Activated CD4-positive, alpha-beta memory T cell treated with anti-CD3 and anti-CD28 coated beads for 36 hours (primary cell): ENCODE measurements at regions of chr6 and their contacts with region 1.

Region 1: DNA sequence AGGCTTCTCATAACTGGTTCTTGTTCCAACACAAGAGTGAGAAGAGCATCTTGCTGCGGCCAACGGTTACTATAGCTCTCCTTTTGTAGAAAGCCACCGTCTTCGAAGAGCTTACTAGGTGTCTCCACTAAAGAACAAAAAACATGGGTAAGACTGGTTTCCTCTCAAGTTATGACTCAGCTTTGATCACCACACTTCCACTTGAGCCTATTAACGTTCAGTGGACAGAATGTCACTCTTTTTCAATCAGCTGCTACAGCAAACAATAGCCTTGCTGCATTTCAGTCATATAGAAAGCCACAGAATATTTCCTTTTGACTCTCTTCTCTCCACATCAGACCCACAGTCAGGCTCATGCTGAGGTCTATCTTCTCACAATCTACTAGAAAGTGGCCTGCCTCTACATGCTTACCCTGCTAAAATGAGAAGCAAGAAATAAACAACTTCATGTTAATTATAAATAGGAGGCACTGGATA is 243.5 kb upstream of the PREP start:
- DNase-seq: peak; percentile 68
- H3K4me3 Mint-ChIP-seq: no peak overlapping the region
- H3K27ac Mint-ChIP-seq: peak overlapping the region; percentile 70
- H3K4me1 Mint-ChIP-seq: peaks cover 65% of the 10 kb centered on the region
- H3K27me3 Mint-ChIP-seq: peaks cover 48% of the 10 kb centered on the region

Region 2: DNA sequence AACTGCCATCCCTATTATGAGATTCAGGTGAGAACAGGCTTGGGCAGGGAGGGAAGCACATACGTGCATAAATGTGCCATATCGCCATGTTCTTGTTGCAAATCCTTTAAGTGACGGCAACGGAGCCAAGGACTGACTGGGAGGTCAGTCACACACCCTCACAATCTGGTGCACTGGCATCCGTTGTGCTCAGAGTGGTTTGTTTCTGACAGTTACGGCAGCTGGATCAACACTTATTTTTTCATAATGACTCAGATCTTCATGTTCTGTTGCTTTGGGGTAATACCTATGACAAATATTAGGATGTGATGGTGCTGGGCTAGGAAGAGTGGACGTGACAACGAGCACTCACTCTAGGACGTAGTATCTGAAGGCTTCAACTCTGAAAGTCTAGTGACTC is 187.4 kb before region 1 on chr6:
- CTCF ChIA-PET with region 1: interaction called, 5 read pairs
- POLR2A ChIA-PET with region 1: interaction called, 3 read pairs
- intact Hi-C with region 1: loop called (anchors 2 kb)
- DNase-seq: peak; percentile 71
- H3K4me3 Mint-ChIP-seq: peak overlapping the region; percentile 36
- H3K27ac Mint-ChIP-seq: peak overlapping the region; percentile 80
- H3K4me1 Mint-ChIP-seq: peaks cover 30% of the 10 kb centered on the region
- H3K27me3 Mint-ChIP-seq: peaks cover 20% of the 10 kb centered on the region

Region 3: DNA sequence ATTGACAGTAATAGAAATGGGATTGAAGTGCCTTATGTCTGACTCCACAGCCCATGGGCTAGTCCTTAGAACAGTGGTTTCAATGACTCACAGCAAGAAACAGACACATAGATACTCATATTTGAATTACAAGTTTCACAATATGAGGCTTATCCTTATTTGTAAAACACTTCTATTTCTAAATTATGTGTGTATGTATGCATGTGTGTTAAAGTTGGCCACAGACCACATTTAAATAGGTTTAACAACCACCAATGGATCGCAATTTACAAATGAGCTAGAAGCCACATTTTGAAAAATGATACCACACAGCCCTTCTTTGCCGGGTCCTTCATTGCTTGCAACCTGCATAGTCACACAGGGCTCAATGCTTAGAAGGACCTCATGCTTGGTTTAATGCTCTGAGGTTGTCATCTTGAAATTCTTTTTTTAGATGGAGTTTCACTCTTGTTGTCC is 85.8 kb before region 1 on chr6:
- CTCF ChIA-PET with region 1: no interaction called
- POLR2A ChIA-PET with region 1: no interaction called
- intact Hi-C with region 1: loop called (anchors 1 kb)
- DNase-seq: peak; percentile 22
- H3K4me3 Mint-ChIP-seq: no peak overlapping the region
- H3K27ac Mint-ChIP-seq: peak overlapping the region; percentile 26
- H3K4me1 Mint-ChIP-seq: peaks cover 9% of the 10 kb centered on the region
- H3K27me3 Mint-ChIP-seq: peaks cover 10% of the 10 kb centered on the region

Region 4: DNA sequence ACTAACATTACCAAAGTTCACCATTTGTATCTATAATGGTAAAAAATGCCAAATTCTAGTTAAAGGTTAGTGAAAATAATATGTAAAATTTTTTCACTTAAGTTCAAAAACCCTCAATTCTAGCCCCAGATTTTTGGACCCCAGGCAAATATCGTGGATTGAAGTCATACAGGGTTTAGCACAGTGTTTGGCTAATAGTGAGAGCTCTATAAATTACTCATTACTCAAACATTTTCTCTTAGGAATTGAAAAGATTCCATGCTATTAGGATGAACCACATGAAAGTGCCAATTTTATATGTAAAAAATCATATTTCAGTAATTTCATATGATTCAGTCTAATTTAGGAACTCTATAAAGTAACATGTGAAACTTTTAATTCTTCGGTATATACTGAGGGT is 73.3 kb before region 1 on chr6:
- CTCF ChIA-PET with region 1: no interaction called
- POLR2A ChIA-PET with region 1: no interaction called
- intact Hi-C with region 1: no loop called
- DNase-seq: no peak
- H3K4me3 Mint-ChIP-seq: no peak overlapping the region
- H3K27ac Mint-ChIP-seq: no peak overlapping the region
- H3K4me1 Mint-ChIP-seq: peaks cover under 1% of the 10 kb centered on the region
- H3K27me3 Mint-ChIP-seq: peaks cover 18% of the 10 kb centered on the region

Region 5: DNA sequence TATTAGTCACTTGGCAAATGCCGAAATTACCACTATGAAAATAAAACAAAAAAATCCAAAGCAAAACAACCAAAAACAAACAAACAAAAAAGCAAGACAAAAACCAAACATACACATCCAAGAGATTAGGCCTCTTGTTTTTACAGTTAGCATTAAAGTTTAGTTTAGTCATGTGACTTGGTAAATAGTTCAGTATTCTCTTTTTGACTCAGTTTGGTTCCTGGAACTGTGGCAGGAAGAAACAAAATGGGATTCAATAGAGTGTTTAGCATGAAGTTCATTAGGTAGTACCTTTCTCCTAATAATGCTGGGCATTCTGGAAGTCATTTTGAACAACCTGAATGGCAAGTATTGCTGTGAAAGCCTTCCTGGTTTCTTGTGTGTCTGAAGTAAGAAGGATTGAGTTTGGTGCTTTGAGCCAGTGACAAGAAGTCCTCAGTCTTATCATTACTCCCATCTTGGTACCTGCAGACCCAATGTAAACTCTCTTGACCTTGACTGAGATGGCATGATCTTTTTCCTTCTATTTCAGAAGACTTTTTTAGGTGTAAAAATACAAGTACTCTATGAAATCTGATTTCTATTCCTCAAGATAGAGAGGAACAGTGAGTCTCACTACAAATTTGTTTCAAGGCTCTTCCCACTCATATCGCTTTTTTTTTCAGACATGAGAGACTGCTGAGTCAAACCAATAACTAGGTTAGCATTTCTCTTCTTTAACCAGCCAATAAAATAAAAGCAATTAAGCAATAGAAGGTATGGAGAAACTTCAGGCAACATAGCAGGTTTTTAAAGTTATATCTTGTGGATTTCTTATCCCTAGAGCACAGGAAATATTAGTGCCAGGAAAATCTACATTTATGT is 19.9 kb before region 1 on chr6:
- CTCF ChIA-PET with region 1: no interaction called
- POLR2A ChIA-PET with region 1: interaction called, 5 read pairs
- intact Hi-C with region 1: loop called (anchors 1 kb)
- DNase-seq: no peak
- H3K4me3 Mint-ChIP-seq: peak overlapping the region; percentile 27
- H3K27ac Mint-ChIP-seq: peak overlapping the region; percentile 81
- H3K4me1 Mint-ChIP-seq: peaks cover 29% of the 10 kb centered on the region
- H3K27me3 Mint-ChIP-seq: peaks cover 13% of the 10 kb centered on the region

Region 6: GRCh38 chr6:105898286-105898685 is 251.9 kb after region 1 on chr6:
- CTCF ChIA-PET with region 1: no interaction called
- POLR2A ChIA-PET with region 1: no interaction called
- intact Hi-C with region 1: loop called (anchors 1 kb)
- DNase-seq: peak; percentile 67
- H3K4me3 Mint-ChIP-seq: no peak overlapping the region
- H3K27ac Mint-ChIP-seq: no peak overlapping the region
- H3K4me1 Mint-ChIP-seq: peaks cover 14% of the 10 kb centered on the region
- H3K27me3 Mint-ChIP-seq: peaks cover 9% of the 10 kb centered on the region

Region 7: GRCh38 chr6:106085984-106086813 is 439.8 kb after region 1 on chr6 and contains the start of gene PRDM1:
- CTCF ChIA-PET with region 1: no interaction called
- POLR2A ChIA-PET with region 1: no interaction called
- intact Hi-C with region 1: loop called (anchors 5 kb)
- DNase-seq: peak; percentile 89
- H3K4me3 Mint-ChIP-seq: peak within 1 kb of the TSS; percentile 90
- H3K27ac Mint-ChIP-seq: peak within 1 kb of the TSS; percentile 94
- H3K4me1 Mint-ChIP-seq: peaks cover 73% of the 10 kb centered on the region
- H3K27me3 Mint-ChIP-seq: peaks cover 2% of the 10 kb centered on the region
- total RNA-seq, gene PRDM1: 70.9 to 78.9 TPM